Right ventricle myocardium inferior (tissue), 1 donor: ENCODE measurements at regions of chr1 and their contacts with region 1.

Region 1: GRCh38 chr1:147738129-147738528 is 22.3 kb downstream of the GJA5 start:
- DNase-seq: no peak
- ATAC-seq: no peak

Region 2: GRCh38 chr1:147545133-147545532 is 193.0 kb before region 1 on chr1:
- intact Hi-C with region 1: no loop called
- DNase-seq: no peak
- ATAC-seq: no peak

Region 3: GRCh38 chr1:147781056-147781471 is 42.9 kb after region 1 on chr1:
- intact Hi-C with region 1: no loop called
- DNase-seq: no peak
- ATAC-seq: no peak

Region 4: GRCh38 chr1:147821883-147822282 is 83.8 kb after region 1 on chr1:
- intact Hi-C with region 1: loop called (anchors 1 kb)
- DNase-seq: no peak
- ATAC-seq: peak; percentile 96